Activated CD4-positive, alpha-beta memory T cell treated with anti-CD3 and anti-CD28 coated beads for 36 hours (primary cell): ENCODE measurements at regions of chr7 and their contacts with region 1.

Region 1: DNA sequence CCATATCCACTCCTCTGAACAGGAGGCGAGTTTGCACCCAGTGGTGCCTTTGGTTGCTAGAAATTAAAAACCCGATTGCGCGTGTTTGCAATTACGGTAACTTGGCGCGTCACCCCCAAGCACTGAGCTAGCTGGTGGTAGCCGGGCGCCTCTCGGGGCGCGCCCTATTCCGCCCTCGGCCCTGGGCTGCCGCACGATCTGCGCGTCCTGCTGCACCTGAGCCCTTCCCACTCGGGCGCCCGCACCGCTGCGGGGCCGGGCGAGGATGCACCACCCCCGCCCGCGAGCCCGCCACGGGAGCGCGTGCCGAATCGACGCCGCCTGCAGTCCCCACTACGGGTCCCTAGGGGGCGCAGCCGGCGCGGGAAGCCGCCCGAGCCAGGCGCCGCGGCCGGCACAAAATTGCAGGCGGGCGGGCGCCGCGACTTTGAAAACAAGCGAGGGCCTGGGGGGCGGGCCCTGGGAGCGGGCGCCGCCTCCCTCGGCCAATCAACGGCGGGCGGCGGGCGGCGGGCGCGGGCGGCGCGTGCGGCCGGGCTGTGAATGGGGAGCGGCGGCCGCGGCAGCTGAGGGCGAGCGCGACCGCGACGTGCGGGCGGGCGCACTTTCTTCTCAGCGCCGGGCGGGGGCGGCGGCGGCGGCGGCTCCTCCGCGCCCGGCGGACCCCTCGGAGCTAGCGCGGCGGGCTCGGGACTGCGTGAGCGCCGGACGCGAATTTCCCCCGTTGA is at the start of gene SDK1:
- DNase-seq: peak; percentile 91
- H3K4me3 Mint-ChIP-seq: peak within 1 kb of the TSS; percentile 68
- H3K27ac Mint-ChIP-seq: no peak within 1 kb of the TSS
- H3K4me1 Mint-ChIP-seq: peaks cover 13% of the 10 kb centered on the region
- H3K27me3 Mint-ChIP-seq: peaks cover 32% of the 10 kb centered on the region
- total RNA-seq, gene SDK1: 0.14 to 0.24 TPM

Region 2: DNA sequence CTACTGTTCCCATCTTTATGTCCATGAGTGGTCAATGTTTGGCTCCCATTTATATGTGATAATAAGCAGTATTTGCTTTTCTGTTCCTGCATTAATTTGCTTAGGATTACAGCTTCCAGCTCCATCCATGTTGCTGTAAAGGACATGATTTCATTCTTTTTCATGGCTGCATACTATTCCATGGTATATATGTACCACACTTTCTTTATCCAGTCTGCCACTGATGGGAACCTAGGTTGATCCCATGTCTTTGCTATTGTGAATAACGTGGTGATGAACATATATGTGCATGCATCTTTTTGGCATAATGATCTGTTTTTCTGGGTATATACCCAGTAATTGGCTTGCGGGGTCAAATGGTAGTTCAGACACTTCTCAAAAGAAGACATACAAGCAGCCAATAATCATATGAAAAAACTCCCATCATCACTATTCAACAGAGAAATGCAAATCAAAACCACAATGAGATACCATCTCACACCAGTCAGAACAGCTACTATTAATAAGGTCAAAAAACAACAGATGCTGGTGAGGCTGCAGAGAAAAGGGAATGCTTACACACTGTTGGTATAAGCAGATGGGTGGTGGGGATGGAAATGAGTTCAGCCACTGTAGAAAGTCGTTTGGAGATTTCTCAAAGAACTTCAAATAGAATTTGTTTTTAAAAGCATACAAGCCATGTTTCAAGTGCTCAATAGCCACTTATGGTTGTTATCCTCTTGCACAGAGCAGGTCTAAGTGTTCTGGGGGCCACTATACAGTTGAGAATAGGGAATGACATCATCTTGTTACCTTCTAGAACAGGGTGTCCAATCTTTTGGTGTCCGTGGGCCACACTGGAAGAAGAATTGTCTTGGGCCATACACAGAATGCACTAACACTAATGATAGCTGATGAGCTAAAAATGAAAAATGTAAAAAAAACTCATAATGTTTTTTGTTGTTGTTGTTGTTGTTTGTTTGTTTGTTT is 22.9 kb before region 1 on chr7:
- CTCF ChIA-PET with region 1: no interaction called
- POLR2A ChIA-PET with region 1: no interaction called
- intact Hi-C with region 1: loop called (anchors 1 kb)
- DNase-seq: no peak
- H3K4me3 Mint-ChIP-seq: no peak overlapping the region
- H3K27ac Mint-ChIP-seq: no peak overlapping the region
- H3K4me1 Mint-ChIP-seq: no peaks in the 10 kb centered on the region
- H3K27me3 Mint-ChIP-seq: peaks cover 9% of the 10 kb centered on the region

Region 3: DNA sequence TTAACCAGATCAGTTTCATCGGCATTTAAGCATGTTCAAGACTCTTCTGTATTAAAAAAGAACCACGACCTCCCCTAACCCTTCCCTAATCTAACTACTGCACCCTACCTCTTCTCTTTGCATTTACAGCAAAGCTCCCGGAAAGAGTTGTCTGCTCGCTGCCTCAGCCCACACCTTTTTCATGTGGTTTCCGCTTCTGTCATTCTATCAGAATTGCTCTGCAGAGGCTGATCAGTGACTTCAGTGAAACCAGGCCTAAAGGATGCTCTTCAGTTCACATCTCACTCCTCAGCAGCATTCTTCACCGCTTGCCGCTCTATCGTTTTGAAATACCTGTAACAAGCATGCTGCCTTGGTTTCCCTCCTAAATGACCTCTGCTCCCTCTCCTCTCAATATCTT is 161.1 kb after region 1 on chr7:
- CTCF ChIA-PET with region 1: no interaction called
- POLR2A ChIA-PET with region 1: no interaction called
- intact Hi-C with region 1: loop called (anchors 2 kb)
- DNase-seq: peak; percentile 83
- H3K4me3 Mint-ChIP-seq: peak overlapping the region; percentile 59
- H3K27ac Mint-ChIP-seq: peak overlapping the region; percentile 80
- H3K4me1 Mint-ChIP-seq: peaks cover 29% of the 10 kb centered on the region
- H3K27me3 Mint-ChIP-seq: no peaks in the 10 kb centered on the region

Region 4: GRCh38 chr7:3673524-3673923 is 372.7 kb after region 1 on chr7:
- CTCF ChIA-PET with region 1: interaction called, 14 read pairs
- POLR2A ChIA-PET with region 1: no interaction called
- intact Hi-C with region 1: loop called (anchors 1 kb)
- DNase-seq: peak; percentile 66
- H3K4me3 Mint-ChIP-seq: no peak overlapping the region
- H3K27ac Mint-ChIP-seq: no peak overlapping the region
- H3K4me1 Mint-ChIP-seq: no peaks in the 10 kb centered on the region
- H3K27me3 Mint-ChIP-seq: no peaks in the 10 kb centered on the region

Region 5: GRCh38 chr7:3897438-3898385 is 596.9 kb after region 1 on chr7:
- CTCF ChIA-PET with region 1: interaction called, 4 read pairs
- POLR2A ChIA-PET with region 1: no interaction called
- intact Hi-C with region 1: loop called (anchors 1 kb)
- DNase-seq: peak; percentile 59
- H3K4me3 Mint-ChIP-seq: no peak overlapping the region
- H3K27ac Mint-ChIP-seq: no peak overlapping the region
- H3K4me1 Mint-ChIP-seq: no peaks in the 10 kb centered on the region
- H3K27me3 Mint-ChIP-seq: peaks cover 4% of the 10 kb centered on the region